ENCODE measurements at regions of chr19 and their contacts with region 1.

Region 1: GRCh38 chr19:53906211-53907192 is 2.6 kb upstream of the CACNG7 start:
- DNase-seq: peak in 1 of 2 experiments; percentile 92
- ATAC-seq: peak; percentile 57 to 65
- H3K4me3 ChIP-seq: peak overlapping the region; percentile 19; the same call in 1 of the 3 replicates
- H3K27ac ChIP-seq: peak overlapping the region; percentile 9 to 82; a peak in 4 of 6 replicates
- H3K4me1 ChIP-seq: peaks cover 42% of the 10 kb centered on the region
- CTCF ChIP-seq: peak; percentile 88
- EP300 ChIP-seq: no peak
- POLR2A ChIP-seq: no peak
- RAD21 ChIP-seq: peak; percentile 85 to 91

Region 2: DNA sequence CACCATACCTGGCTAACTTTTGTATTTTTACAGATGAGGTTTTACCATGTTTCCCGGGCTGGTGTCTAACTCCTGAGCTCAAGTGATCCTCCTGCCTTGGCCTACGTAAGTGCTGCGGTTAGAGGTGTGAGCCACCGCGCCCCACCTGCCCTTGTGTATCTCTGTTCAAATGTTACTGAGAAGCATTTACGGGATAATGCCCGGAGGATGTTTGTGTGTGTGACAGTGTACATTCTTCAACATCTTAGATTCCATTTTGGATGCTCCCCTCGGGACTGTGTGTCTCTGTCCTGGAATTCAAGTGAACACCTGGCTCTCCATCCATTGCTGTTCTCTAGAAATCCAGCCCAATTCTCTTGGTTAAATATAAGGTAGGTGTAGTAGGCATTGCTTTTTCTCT is 176.1 kb before region 1 on chr19:
- CTCF ChIA-PET with region 1: no interaction called
- POLR2A ChIA-PET with region 1: no interaction called
- DNase-seq: no peak
- ATAC-seq: no peak
- H3K4me3 ChIP-seq: no peak overlapping the region
- H3K27ac ChIP-seq: no peak overlapping the region
- H3K4me1 ChIP-seq: no peaks in the 10 kb centered on the region
- CTCF ChIP-seq: no peak
- EP300 ChIP-seq: no peak
- POLR2A ChIP-seq: no peak
- RAD21 ChIP-seq: no peak

Region 3: GRCh38 chr19:53936029-53936428 is 29.5 kb after region 1 on chr19:
- CTCF ChIA-PET with region 1: interaction called, 10 read pairs
- POLR2A ChIA-PET with region 1: no interaction called
- DNase-seq: no peak
- ATAC-seq: no peak
- H3K4me3 ChIP-seq: no peak overlapping the region
- H3K27ac ChIP-seq: no peak overlapping the region
- H3K4me1 ChIP-seq: no peaks in the 10 kb centered on the region
- CTCF ChIP-seq: no peak
- EP300 ChIP-seq: no peak
- POLR2A ChIP-seq: no peak
- RAD21 ChIP-seq: no peak

Region 4: GRCh38 chr19:53947624-53948023 is 41.1 kb after region 1 on chr19:
- CTCF ChIA-PET with region 1: interaction called, 11 read pairs
- POLR2A ChIA-PET with region 1: no interaction called
- DNase-seq: peak; percentile 67 to 84
- ATAC-seq: peak; percentile 73 to 83; a peak in 4 of 6 replicates
- H3K4me3 ChIP-seq: no peak overlapping the region
- H3K27ac ChIP-seq: no peak overlapping the region
- H3K4me1 ChIP-seq: 0 out of 3 replicates have a peak, but pooled peaks cover 8% of the 10 kb centered on the region
- CTCF ChIP-seq: peak; percentile 40; the same call in 2 of the 3 replicates
- EP300 ChIP-seq: no peak
- POLR2A ChIP-seq: no peak
- RAD21 ChIP-seq: peak; percentile 24 to 63; a peak in 2 of 5 replicates

Region 5: GRCh38 chr19:53965091-53965739 is 58.7 kb after region 1 on chr19:
- CTCF ChIA-PET with region 1: interaction called, 12 read pairs
- POLR2A ChIA-PET with region 1: no interaction called
- DNase-seq: no peak
- ATAC-seq: no peak
- H3K4me3 ChIP-seq: no peak overlapping the region
- H3K27ac ChIP-seq: no peak overlapping the region
- H3K4me1 ChIP-seq: peaks cover 6% of the 10 kb centered on the region; the same call in 1 of the 3 replicates
- CTCF ChIP-seq: no peak
- EP300 ChIP-seq: no peak
- POLR2A ChIP-seq: no peak
- RAD21 ChIP-seq: no peak

Region 6: DNA sequence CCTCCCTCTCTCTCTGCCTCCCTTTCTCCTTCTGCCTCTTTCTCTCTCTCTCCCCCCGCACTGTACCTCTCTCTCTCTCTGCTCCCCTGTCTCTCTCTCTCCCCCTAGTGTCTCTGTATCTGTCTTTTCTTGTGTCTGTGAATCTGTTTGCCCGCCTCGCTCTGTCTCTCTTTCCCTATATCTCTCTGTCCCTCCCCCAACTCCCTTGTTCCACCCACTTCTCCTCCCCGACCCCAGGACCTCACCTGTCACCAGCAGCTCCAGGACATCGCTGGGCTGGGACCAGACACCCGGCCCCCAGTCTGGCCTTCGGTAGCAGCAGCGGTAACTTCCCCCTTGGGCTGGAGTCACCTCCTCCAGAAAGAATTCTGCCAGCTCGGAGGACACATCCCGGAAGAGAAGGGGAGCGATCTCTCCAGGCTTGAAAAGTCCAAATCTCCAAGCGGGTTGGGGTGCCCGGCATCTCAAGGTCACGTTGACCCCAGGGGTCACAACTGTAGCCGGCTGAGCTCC is 190.2 kb after region 1 on chr19:
- CTCF ChIA-PET with region 1: interaction called, 18 read pairs
- POLR2A ChIA-PET with region 1: no interaction called
- DNase-seq: peak; percentile 68 to 79
- ATAC-seq: peak; percentile 88 to 89
- H3K4me3 ChIP-seq: peak overlapping the region; percentile 33
- H3K27ac ChIP-seq: peak overlapping the region; percentile 40 to 78; a peak in 5 of 6 replicates
- H3K4me1 ChIP-seq: peaks cover 11% of the 10 kb centered on the region; the same call in 1 of the 3 replicates
- CTCF ChIP-seq: no peak; the same call in 2 of the 3 replicates
- EP300 ChIP-seq: no peak
- POLR2A ChIP-seq: peak; percentile 17; the same call in 1 of the 2 replicates
- RAD21 ChIP-seq: peak in 1 of 2 experiments; percentile 65; a peak in 4 of 5 replicates